ENCODE measurements at regions of chr21 and their contacts with region 1.

Region 1: GRCh38 chr21:42258153-42258884 is 39.4 kb downstream of the ABCG1 start:
- DNase-seq: peak; percentile 87
- H3K4me3 Mint-ChIP-seq: no peak overlapping the region
- H3K27ac Mint-ChIP-seq: no peak overlapping the region
- H3K4me1 Mint-ChIP-seq: peaks cover 26% of the 10 kb centered on the region
- H3K27me3 Mint-ChIP-seq: peaks cover 4% of the 10 kb centered on the region

Region 2: GRCh38 chr21:42145569-42146272 is 112.6 kb before region 1 on chr21:
- CTCF ChIA-PET with region 1: interaction called, 75 read pairs
- DNase-seq: peak; percentile 76
- H3K4me3 Mint-ChIP-seq: no peak overlapping the region
- H3K27ac Mint-ChIP-seq: no peak overlapping the region
- H3K4me1 Mint-ChIP-seq: peaks cover 4% of the 10 kb centered on the region
- H3K27me3 Mint-ChIP-seq: peaks cover 28% of the 10 kb centered on the region

Region 3: GRCh38 chr21:42164064-42164789 is 94.1 kb before region 1 on chr21:
- CTCF ChIA-PET with region 1: interaction called, 135 read pairs
- DNase-seq: peak; percentile 74
- H3K4me3 Mint-ChIP-seq: no peak overlapping the region
- H3K27ac Mint-ChIP-seq: no peak overlapping the region
- H3K4me1 Mint-ChIP-seq: peaks cover 34% of the 10 kb centered on the region
- H3K27me3 Mint-ChIP-seq: peaks cover 7% of the 10 kb centered on the region

Region 4: GRCh38 chr21:42220138-42220701 is 38.1 kb before region 1 on chr21:
- CTCF ChIA-PET with region 1: interaction called, 25 read pairs
- DNase-seq: peak; percentile 88
- H3K4me3 Mint-ChIP-seq: peak overlapping the region; percentile 84
- H3K27ac Mint-ChIP-seq: peak overlapping the region; percentile 89
- H3K4me1 Mint-ChIP-seq: peaks cover 37% of the 10 kb centered on the region
- H3K27me3 Mint-ChIP-seq: no peaks in the 10 kb centered on the region

Region 5: DNA sequence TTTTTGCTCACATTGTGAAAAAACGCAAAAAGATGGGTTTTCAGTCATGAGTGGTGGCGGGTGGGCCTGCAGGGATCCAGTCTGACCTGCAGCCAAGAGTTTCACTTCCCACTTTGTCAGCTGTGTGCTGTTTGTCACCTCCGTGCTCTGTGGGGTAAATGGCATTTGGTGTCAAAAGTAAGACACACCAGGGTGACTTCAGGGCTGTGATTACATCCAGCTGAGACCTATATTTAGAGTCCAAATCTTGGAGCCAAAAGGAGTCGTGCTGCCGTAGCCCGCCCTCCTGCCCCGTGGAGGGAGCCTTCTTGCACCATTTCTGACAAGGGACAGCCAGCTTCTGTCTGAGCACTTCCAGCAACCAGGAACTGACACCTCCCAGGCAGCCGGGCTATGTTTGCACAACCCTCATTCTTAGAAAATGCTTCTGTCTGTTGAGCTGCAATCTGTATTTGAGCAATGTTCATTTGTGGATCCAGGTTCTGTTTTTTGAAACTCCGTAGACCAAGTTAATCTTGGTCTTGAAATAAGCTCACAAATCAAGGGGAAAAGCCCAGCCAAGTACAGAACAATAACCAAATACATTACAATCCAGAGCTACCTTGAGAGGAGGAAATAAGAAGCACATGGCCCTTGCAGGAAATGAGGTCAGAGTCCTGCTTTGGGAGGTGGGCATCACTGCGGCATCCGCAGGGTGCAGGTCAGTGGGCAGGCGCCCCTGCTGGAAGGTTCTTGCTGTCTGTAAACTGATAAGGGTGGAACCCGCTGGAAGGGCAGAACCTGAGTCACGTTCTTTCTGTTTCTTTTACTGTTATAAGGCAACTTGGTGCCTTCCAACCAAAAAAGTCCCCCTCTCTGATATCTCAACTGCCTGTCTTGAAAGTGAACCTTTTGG is 25.0 kb before region 1 on chr21:
- CTCF ChIA-PET with region 1: interaction called, 56 read pairs
- DNase-seq: peak; percentile 89
- H3K4me3 Mint-ChIP-seq: peak overlapping the region; percentile 36
- H3K27ac Mint-ChIP-seq: peak overlapping the region; percentile 97
- H3K4me1 Mint-ChIP-seq: peaks cover 97% of the 10 kb centered on the region
- H3K27me3 Mint-ChIP-seq: no peaks in the 10 kb centered on the region

Region 6: DNA sequence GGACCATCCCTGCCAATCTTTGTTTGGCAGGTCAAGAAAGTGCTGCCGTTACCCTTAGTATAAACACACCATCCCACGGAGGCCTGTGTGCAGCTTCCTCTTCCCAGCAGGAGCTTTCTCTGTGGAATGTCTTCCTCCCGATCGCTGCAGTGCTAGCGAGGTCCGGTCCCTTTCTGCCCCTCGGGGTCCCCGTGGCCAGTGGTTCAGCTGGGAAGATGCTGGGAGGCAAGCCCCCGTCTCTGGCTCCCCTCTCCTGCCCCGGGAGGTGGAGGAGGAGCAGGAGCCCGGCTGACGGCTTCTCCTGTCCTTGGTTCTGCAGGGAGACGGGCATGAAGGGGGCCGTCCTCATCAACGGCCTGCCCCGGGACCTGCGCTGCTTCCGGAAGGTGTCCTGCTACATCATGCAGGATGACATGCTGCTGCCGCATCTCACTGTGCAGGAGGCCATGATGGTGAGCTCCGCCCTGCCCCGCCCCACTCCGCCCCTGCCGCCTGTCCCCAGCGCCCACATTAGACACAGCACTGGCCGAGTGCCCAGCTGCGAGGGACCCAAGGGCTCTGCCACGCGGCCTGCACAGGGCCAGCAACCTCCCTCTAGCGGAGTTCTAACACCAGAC is 14.8 kb after region 1 on chr21:
- CTCF ChIA-PET with region 1: interaction called, 43 read pairs
- DNase-seq: no peak
- H3K4me3 Mint-ChIP-seq: no peak overlapping the region
- H3K27ac Mint-ChIP-seq: no peak overlapping the region
- H3K4me1 Mint-ChIP-seq: peaks cover 16% of the 10 kb centered on the region
- H3K27me3 Mint-ChIP-seq: no peaks in the 10 kb centered on the region